ENCODE measurements at regions of chr1 and their contacts with region 1.

Region 1: GRCh38 chr1:114219172-114219868 is 65.7 kb upstream of the SYT6 start:
- DNase-seq: no peak
- ATAC-seq: peak in 1 of 4 donors; percentile 18
- H3K4me3 ChIP-seq: peak overlapping the region in 6 of 12 donors; percentile 10 to 44 (median 22)
- H3K27ac ChIP-seq: peak overlapping the region in 2 of 12 donors; percentile 18 to 54
- H3K4me1 ChIP-seq: peaks cover 0 to 17% (median 1%) of the 10 kb centered on the region in 12 donors
- H3K27me3 ChIP-seq: peaks cover 0 to 4% (median 0%) of the 10 kb centered on the region in 9 donors
- CTCF ChIP-seq: peak in 6 of 12 donors; percentile 8 to 34 (median 20)
- POLR2A ChIP-seq: no peak

Region 2: GRCh38 chr1:114482204-114482980 is 263.1 kb after region 1 on chr1:
- intact Hi-C with region 1: loop called in 1 of 10 experiments (anchors 5 kb)
- DNase-seq: no peak
- ATAC-seq: peak in 1 of 4 donors; percentile 71
- H3K4me3 ChIP-seq: no peak overlapping the region
- H3K27ac ChIP-seq: peak overlapping the region in 1 of 12 donors; percentile 38
- H3K4me1 ChIP-seq: peaks cover 0 to 19% (median 6%) of the 10 kb centered on the region in 12 donors
- H3K27me3 ChIP-seq: no peaks in the 10 kb centered on the region
- CTCF ChIP-seq: no peak
- POLR2A ChIP-seq: no peak